GM12878 (cell line): ENCODE measurements at regions of chr6 and their contacts with region 1.

Region 1: DNA sequence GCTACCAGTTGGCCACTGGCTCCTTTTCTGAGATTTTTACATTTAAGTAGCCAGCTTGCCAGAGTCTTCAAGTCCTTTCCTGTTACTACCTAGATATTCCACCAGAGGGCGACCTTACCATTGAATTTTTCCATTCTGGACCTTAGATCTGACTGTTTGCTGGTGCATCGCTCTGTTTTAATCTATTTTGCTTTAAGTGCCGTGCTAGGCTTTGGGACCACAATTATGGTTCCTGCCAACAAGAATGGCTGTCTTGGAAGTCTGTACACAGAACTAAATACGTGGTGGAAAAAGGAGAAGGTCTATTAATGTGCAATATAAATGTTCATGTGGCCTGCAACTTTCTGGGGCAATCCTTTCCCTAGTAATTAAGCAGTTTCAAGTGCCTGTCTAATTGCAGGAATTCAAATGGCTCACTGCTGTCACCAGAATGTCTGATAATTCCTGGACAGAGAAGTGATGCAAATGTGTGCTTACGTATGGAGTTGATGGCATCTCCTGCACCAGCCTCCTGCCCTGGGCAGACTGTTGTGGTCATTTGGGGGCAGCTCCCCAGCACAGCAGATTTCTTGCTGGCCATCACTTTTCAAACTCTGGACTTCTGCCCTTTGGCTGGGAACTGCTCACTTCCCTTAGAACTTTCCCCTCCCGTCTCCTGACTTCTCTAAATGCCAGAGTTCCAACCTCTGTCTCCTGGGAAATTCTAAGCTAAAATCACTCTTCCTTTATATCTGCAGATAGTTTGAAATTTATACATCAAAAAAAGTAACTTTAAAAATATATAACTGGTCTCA is 5.6 kb upstream of the HLA-DOA start:
- DNase-seq: peak; percentile 75
- ATAC-seq: peak; percentile 81
- H3K4me3 ChIP-seq: no peak overlapping the region
- H3K27ac ChIP-seq: no peak overlapping the region
- H3K4me1 ChIP-seq: peaks cover 20% of the 10 kb centered on the region
- H3K27me3 ChIP-seq: no peaks in the 10 kb centered on the region
- CTCF ChIP-seq: peak; percentile 57 to 80 (median 68); a peak in 5 of 6 replicates
- EP300 ChIP-seq: no peak
- POLR2A ChIP-seq: no peak
- RAD21 ChIP-seq: peak; percentile 94

Region 2: DNA sequence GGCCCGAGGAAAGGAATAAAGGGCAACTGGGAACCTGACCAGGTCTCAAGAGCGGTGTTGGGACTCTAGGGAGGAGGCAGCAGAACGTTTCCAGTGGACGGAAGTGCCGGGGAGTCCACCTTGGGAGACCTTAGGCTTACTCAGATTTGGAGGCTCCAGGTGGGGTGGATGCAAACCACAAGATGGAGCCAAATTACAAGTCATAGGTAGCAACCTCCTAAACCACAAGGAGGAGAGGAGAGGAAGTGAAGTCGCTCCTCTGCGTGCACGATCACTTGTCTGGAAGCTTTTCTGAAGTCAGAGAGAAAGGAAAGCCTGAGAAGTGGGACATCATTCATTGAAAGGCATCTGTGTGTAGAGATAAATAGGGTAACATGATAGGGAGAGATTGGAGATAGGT is 15.0 kb before region 1 on chr6:
- CTCF ChIA-PET with region 1: interaction called, 26 read pairs
- POLR2A ChIA-PET with region 1: interaction called, 4 read pairs
- RAD21 ChIA-PET with region 1: interaction called, 3 read pairs
- SMC1A ChIA-PET with region 1: interaction called, 9 read pairs
- in situ Hi-C with region 1: no loop called
- intact Hi-C with region 1: no loop called
- DNase-seq: no peak
- ATAC-seq: peak; percentile 89
- H3K4me3 ChIP-seq: no peak overlapping the region
- H3K27ac ChIP-seq: no peak overlapping the region
- H3K4me1 ChIP-seq: peaks cover 7% of the 10 kb centered on the region; the same call in 1 of the 2 replicates
- H3K27me3 ChIP-seq: no peaks in the 10 kb centered on the region
- CTCF ChIP-seq: peak; percentile 51 to 60 (median 53)
- EP300 ChIP-seq: no peak
- POLR2A ChIP-seq: no peak
- RAD21 ChIP-seq: peak; percentile 73

Region 3: DNA sequence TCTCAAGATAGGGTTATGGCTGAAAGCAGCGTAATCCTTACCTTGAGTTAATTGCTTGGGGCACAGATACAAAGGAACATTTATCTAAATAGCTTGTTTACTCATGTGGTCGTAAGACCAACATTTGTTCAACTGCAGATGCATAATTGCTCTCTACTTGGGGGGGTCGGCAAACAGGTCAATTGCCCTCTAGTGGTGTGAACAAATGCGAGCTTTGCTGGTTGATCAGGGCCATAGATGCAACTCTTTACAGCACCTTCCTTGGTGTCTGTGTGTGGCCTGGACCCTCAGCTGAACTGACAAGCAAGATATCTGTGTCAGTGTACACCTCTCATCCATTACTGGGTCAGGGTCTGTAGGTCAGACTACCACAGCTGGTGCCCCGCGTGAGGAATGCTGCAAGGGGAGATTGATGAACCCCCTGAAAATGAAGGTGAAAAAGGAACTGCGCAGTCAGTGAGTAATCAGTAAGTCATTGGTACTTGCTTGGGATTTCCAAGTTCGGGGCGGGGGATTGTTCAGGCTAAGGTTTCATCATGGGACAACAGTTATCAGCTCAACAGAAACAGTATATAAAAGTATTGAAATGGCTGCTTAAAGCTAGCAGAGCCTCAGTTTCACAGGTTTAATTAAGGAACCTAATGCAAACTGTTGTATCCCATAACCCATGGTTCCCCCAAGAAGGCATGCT is 34.4 kb after region 1 on chr6:
- CTCF ChIA-PET with region 1: interaction called, 73 read pairs
- POLR2A ChIA-PET with region 1: interaction called, 7 read pairs
- RAD21 ChIA-PET with region 1: interaction called, 13 read pairs
- SMC1A ChIA-PET with region 1: interaction called, 36 read pairs
- in situ Hi-C with region 1: no loop called
- intact Hi-C with region 1: loop called (anchors 1 kb)
- DNase-seq: no peak
- ATAC-seq: peak; percentile 85
- H3K4me3 ChIP-seq: no peak overlapping the region
- H3K27ac ChIP-seq: no peak overlapping the region
- H3K4me1 ChIP-seq: no peaks in the 10 kb centered on the region
- H3K27me3 ChIP-seq: no peaks in the 10 kb centered on the region
- CTCF ChIP-seq: peak; percentile 23 to 54 (median 53)
- EP300 ChIP-seq: no peak
- POLR2A ChIP-seq: no peak
- RAD21 ChIP-seq: peak; percentile 43; the same call in 1 of the 2 replicates

Region 4: DNA sequence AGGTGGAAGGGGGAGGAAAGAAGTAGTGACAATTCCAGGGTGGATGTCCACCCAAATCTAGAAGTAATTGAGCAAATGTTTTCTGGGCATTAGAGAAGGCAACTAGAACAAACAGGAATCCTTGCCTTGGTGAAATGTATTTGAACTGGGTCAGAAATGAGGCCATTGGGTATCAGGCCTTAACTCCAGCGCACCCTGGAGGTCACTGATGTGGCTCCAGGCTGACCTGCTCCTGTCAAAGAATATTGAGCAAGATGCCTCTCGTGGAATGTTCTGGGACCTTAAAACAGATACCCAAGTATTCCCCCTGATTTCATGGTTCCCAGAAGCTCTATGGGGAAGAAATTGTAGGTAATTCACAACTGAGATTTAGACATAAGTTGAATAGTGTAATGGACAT is 67.7 kb after region 1 on chr6:
- CTCF ChIA-PET with region 1: interaction called, 281 read pairs
- POLR2A ChIA-PET with region 1: interaction called, 56 read pairs
- RAD21 ChIA-PET with region 1: interaction called, 108 read pairs
- SMC1A ChIA-PET with region 1: interaction called, 177 read pairs
- in situ Hi-C with region 1: loop called (anchors 5 kb)
- intact Hi-C with region 1: loop called (anchors 1 kb)
- DNase-seq: no peak
- ATAC-seq: peak; percentile 72
- H3K4me3 ChIP-seq: no peak overlapping the region
- H3K27ac ChIP-seq: 0 out of 2 replicates have a peak overlapping the region, but pooled peaks have one; percentile 35
- H3K4me1 ChIP-seq: peaks cover 21% of the 10 kb centered on the region
- H3K27me3 ChIP-seq: no peaks in the 10 kb centered on the region
- CTCF ChIP-seq: peak; percentile 70 to 73 (median 72)
- EP300 ChIP-seq: no peak
- POLR2A ChIP-seq: no peak
- RAD21 ChIP-seq: peak; percentile 78

Region 5: GRCh38 chr6:33118525-33119123 is 103.6 kb after region 1 on chr6:
- CTCF ChIA-PET with region 1: interaction called, 103 read pairs
- POLR2A ChIA-PET with region 1: interaction called, 7 read pairs
- RAD21 ChIA-PET with region 1: interaction called, 11 read pairs
- SMC1A ChIA-PET with region 1: interaction called, 139 read pairs
- in situ Hi-C with region 1: no loop called
- intact Hi-C with region 1: no loop called
- DNase-seq: no peak
- ATAC-seq: peak; percentile 45
- H3K4me3 ChIP-seq: no peak overlapping the region
- H3K27ac ChIP-seq: no peak overlapping the region
- H3K4me1 ChIP-seq: peaks cover 36% of the 10 kb centered on the region
- H3K27me3 ChIP-seq: peaks cover 0 to 2% of the 10 kb centered on the region in 2 experiments; a peak in 2 of 4 replicates
- CTCF ChIP-seq: peak; percentile 53 to 66 (median 61); a peak in 5 of 6 replicates
- EP300 ChIP-seq: no peak
- POLR2A ChIP-seq: no peak
- RAD21 ChIP-seq: peak; percentile 62

Region 6: GRCh38 chr6:33161354-33162331 is 146.6 kb after region 1 on chr6:
- CTCF ChIA-PET with region 1: interaction called, 11 read pairs
- POLR2A ChIA-PET with region 1: no interaction called
- RAD21 ChIA-PET with region 1: interaction called, 4 read pairs
- SMC1A ChIA-PET with region 1: interaction called, 3 read pairs
- in situ Hi-C with region 1: no loop called
- intact Hi-C with region 1: no loop called
- DNase-seq: no peak
- ATAC-seq: peak; percentile 96
- H3K4me3 ChIP-seq: peak overlapping the region; percentile 70; the same call in 1 of the 2 replicates
- H3K27ac ChIP-seq: no peak overlapping the region
- H3K4me1 ChIP-seq: peaks cover 4% of the 10 kb centered on the region
- H3K27me3 ChIP-seq: no peaks in the 10 kb centered on the region
- CTCF ChIP-seq: peak; percentile 89 to 97 (median 96); a peak in 5 of 6 replicates
- EP300 ChIP-seq: no peak
- POLR2A ChIP-seq: no peak
- RAD21 ChIP-seq: peak; percentile 64